ENCODE measurements at regions of chr12 and their contacts with region 1.

Region 1: GRCh38 chr12:71719615-71720370 is 33.9 kb downstream of the TMEM19 start:
- DNase-seq: no peak
- ATAC-seq: no peak
- H3K4me3 Mint-ChIP-seq: no peak overlapping the region
- H3K27ac Mint-ChIP-seq: no peak overlapping the region
- H3K4me1 Mint-ChIP-seq: no peaks in the 10 kb centered on the region
- H3K27me3 Mint-ChIP-seq: no peaks in the 10 kb centered on the region
- CTCF ChIP-seq: no peak

Region 2: DNA sequence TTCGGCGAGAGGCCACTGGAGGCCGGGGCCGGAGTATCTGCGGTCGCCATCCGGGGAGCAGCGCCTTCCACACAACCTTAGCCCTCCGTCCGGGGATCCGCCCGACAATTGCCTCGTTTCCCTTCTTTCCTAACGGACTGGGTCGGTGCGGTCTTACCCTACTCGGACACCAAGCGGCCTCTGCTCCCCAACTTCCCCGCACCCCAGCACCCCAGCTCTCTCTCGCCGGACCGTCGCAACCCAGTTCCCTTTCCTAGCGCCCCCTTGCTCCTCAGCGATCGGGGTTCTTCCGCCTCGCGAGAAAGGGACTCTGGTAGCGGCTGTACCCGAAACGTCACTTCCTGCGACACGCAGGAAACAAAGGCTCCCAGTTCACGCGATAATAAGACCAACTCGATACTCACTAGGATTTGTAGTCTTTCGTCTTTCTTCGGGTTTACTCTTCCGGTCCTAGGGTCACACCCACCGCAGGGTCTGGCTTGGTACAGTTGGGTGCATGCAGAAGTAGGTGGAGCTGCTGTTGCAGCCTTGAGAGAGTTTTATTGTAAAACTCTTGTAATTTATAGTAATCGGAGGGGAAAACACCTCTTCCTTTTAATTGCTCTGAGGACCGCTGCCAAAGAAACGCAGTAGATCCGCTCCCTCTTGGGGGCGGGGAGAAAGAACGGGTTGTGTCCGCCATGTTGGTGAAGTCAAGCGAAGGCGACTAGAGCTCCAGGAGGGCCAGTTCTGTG is 56.1 kb before region 1 on chr12 and contains the start of gene ZFC3H1:
- CTCF ChIA-PET with region 1: no interaction called
- POLR2A ChIA-PET with region 1: no interaction called
- intact Hi-C with region 1: no loop called
- DNase-seq: peak; percentile 95
- ATAC-seq: peak; percentile 85
- H3K4me3 Mint-ChIP-seq: peak within 1 kb of the TSS; percentile 100
- H3K27ac Mint-ChIP-seq: peak within 1 kb of the TSS; percentile 100
- H3K4me1 Mint-ChIP-seq: peaks cover 35% of the 10 kb centered on the region
- H3K27me3 Mint-ChIP-seq: no peaks in the 10 kb centered on the region
- CTCF ChIP-seq: no peak
- total RNA-seq, gene ZFC3H1: 47.1 to 58.4 TPM

Region 3: GRCh38 chr12:71708658-71709057 is 11.1 kb before region 1 on chr12:
- CTCF ChIA-PET with region 1: no interaction called
- POLR2A ChIA-PET with region 1: no interaction called
- intact Hi-C with region 1: no loop called
- DNase-seq: no peak
- ATAC-seq: no peak
- H3K4me3 Mint-ChIP-seq: no peak overlapping the region
- H3K27ac Mint-ChIP-seq: no peak overlapping the region
- H3K4me1 Mint-ChIP-seq: no peaks in the 10 kb centered on the region
- H3K27me3 Mint-ChIP-seq: no peaks in the 10 kb centered on the region
- CTCF ChIP-seq: no peak

Region 4: DNA sequence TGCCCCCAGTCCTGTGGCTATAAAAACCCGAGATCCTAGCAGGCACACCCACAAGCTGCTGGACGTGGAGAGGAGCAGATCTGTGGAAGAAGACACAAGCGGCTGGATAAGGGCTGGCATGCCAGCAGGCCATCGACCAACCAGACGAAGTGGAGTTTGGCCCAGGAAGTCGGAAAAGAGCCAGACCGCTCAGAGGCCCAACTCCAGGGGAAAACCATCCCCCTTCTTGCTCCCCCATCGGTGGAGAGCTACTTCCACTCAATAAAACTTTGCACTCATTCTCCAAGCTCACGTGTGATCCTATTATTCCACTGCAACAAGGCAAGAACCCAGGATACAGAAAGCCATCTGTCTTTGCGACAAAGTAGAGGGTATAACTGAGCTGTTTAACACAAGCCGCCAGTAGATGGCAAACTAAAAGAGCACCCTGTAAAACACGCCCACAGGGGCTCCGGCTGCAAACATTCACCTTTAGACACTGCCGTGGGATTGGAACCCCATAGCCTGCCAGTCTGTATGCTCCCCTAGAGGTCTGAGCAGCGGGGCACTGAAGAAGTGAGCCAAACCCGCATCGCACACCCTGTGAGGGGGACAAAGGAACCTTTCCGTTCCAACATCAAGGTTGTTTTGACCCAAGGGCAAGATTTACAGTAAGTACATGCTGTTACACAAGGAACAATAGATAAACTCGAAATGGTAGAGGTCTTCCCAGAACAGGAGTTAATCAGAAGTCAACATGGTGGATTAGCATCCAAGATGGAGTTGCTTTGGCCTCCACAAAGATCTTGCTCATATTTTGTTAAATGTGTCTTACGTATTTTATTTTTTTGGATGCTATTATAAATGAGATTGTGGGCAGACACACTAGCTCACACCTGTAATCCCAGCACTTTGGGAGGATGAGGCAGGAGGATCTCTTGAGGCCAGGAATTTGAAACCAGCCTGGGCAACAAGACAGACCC is 12.2 kb after region 1 on chr12:
- CTCF ChIA-PET with region 1: no interaction called
- POLR2A ChIA-PET with region 1: no interaction called
- intact Hi-C with region 1: no loop called
- DNase-seq: peak; percentile 13
- ATAC-seq: no peak
- H3K4me3 Mint-ChIP-seq: no peak overlapping the region
- H3K27ac Mint-ChIP-seq: no peak overlapping the region
- H3K4me1 Mint-ChIP-seq: no peaks in the 10 kb centered on the region
- H3K27me3 Mint-ChIP-seq: no peaks in the 10 kb centered on the region
- CTCF ChIP-seq: no peak

Region 5: GRCh38 chr12:71799106-71799505 is 79.3 kb after region 1 on chr12:
- CTCF ChIA-PET with region 1: no interaction called
- POLR2A ChIA-PET with region 1: interaction called, 10 read pairs
- intact Hi-C with region 1: no loop called
- DNase-seq: no peak
- ATAC-seq: no peak
- H3K4me3 Mint-ChIP-seq: no peak overlapping the region
- H3K27ac Mint-ChIP-seq: no peak overlapping the region
- H3K4me1 Mint-ChIP-seq: no peaks in the 10 kb centered on the region
- H3K27me3 Mint-ChIP-seq: peaks cover 1% of the 10 kb centered on the region
- CTCF ChIP-seq: no peak